Heart right ventricle (tissue), 16 donors: ENCODE measurements at regions of chr6 and their contacts with region 1.

Region 1: DNA sequence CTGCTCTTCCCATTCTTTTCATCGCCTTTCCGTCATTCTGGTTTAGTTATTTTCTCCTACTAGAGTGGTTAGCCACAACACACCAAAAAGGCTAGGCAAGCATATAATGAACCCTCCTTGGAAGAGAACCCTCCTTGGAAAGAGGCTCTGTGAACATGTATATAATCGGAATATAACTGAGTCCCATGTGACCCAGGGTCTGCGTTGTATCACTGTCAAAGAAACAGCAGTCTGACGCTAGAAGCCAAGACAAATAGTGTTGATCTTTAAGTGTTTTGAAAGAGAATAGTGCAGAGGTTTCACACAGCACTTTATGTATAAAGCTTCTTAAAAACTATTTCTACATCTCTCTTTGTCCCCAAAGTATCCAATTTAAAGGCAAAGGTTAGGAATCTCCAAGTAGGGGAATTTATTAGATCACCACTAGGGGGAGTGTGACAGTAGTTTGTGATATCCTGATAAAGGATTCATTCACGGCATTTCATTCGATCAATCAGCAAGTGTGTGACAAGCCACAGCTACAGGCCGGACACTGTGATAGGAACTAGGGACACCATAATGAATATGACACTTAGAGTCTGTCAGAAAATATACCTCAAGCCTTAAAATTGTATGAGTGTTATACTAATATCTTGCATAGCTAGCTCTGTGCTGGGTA is 395.3 kb downstream of the CD109 start:
- DNase-seq: no peak
- ATAC-seq: peak in 5 of 8 donors; percentile 21 to 77 (median 49)
- H3K4me3 ChIP-seq: no peak overlapping the region
- H3K27ac ChIP-seq: peak overlapping the region in 1 of 10 donors; percentile 37
- H3K4me1 ChIP-seq: peaks cover 0 to 6% (median 0%) of the 10 kb centered on the region in 9 donors
- H3K27me3 ChIP-seq: no peaks in the 10 kb centered on the region
- CTCF ChIP-seq: peak; percentile 42 to 81 (median 70)

Region 2: DNA sequence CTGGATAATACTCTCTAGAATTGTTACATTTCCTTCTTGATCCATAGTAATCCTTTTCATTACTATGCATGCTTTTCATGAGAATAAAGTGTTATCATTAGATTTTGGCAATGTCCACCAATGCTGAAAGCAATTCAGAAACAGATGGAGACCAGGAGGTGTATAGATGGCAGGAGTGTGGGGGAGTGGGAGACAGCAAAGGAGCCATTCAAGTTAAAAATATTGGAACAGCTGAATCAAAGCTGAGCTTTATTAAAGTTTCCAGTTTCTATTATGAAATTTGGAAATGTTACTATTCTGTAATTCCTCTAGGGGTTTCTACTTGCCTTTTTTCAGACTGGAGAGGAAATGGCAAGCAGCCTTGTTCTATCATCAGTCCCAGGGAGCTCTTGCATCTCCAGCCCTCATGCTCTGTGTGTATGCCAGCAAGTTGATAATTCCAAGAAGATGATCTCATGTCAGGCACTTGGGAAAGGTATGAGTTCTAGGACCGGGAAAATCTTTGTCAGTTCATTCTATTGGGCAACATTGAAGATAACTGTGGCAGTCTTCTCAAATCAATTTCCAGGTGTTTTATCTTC is 167.3 kb before region 1 on chr6:
- intact Hi-C with region 1: no loop called
- DNase-seq: peak in 1 of 2 donors; percentile 61
- ATAC-seq: peak; percentile 88 to 98 (median 94)
- H3K4me3 ChIP-seq: no peak overlapping the region
- H3K27ac ChIP-seq: peak overlapping the region in 5 of 10 donors; percentile 31 to 72 (median 61)
- H3K4me1 ChIP-seq: peaks cover 0 to 5% (median 0%) of the 10 kb centered on the region in 9 donors
- H3K27me3 ChIP-seq: no peaks in the 10 kb centered on the region
- CTCF ChIP-seq: no peak

Region 3: GRCh38 chr6:74069089-74069581 is 22.1 kb before region 1 on chr6:
- intact Hi-C with region 1: loop called in 1 of 10 experiments (anchors 1 kb)
- DNase-seq: no peak
- ATAC-seq: no peak
- H3K4me3 ChIP-seq: no peak overlapping the region
- H3K27ac ChIP-seq: peak overlapping the region in 1 of 10 donors; percentile 26
- H3K4me1 ChIP-seq: peaks cover 0 to 5% (median 0%) of the 10 kb centered on the region in 9 donors
- H3K27me3 ChIP-seq: no peaks in the 10 kb centered on the region
- CTCF ChIP-seq: no peak